Ascending aorta (tissue), 2 donors: ENCODE measurements at regions of chr18 and their contacts with region 1.

Region 1: DNA sequence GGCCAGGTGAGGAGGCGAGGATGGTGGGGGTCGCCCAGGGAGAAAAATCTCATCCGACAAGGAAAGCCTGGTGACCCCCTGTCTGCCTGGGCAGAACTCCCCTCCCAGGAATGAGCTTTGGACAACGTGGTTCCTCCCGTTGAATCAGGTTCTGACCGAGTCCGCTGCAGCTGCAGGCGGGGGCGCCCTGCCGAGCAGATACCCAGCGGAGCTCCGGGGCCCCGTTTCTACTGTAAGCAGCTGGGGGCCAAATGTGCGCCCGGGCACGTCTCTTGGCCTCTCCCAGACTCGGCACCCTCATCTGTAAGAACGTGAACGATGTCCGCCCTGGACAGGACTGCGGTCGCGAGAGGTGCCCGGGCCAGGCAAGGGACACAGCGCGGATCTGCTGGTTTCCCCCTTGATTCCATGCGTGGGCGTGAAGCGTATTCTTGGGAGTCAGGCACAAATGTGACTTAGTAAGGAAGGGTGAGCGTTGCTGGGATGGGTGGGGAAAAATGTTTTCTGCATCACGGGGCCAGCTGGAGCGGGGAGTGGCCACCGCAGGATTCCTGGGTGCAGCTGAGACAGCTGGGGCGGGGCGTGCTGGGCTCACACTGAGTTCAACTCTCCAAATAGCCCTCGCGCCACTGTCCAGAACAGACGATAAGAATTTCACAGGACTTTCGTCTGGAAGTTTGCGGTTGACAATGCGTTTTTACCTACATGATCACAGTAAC is 20.2 kb upstream of the TUBB6 start:
- DNase-seq: peak; percentile 41 to 94
- H3K4me3 ChIP-seq: peak overlapping the region; percentile 41 to 65
- H3K27ac ChIP-seq: peak overlapping the region; percentile 85 to 86
- H3K4me1 ChIP-seq: peaks cover 5 to 7% of the 10 kb centered on the region in 2 donors
- H3K27me3 ChIP-seq: no peaks in the 10 kb centered on the region
- CTCF ChIP-seq: no peak

Region 2: DNA sequence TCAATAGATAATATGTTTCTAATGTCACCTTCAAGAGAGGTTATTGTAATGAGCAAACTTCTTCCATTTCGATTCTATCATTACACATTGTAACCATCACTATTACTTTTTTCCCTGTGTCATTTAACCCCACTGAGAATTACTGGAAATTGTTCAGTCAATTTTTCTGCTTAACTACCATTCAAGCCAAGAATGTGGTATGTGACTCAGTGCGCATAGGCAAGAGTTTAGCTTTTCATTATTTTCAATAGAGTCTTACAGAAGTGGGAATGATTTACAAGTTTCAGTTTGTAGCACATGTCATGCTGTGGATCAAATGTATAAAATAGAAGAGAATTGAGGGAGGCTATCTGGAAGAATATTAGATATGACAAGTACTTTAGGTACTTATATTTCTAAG is 1104.2 kb before region 1 on chr18:
- intact Hi-C with region 1: no loop called
- DNase-seq: no peak
- H3K4me3 ChIP-seq: no peak overlapping the region
- H3K27ac ChIP-seq: no peak overlapping the region
- H3K4me1 ChIP-seq: peaks cover 0 to 14% of the 10 kb centered on the region in 2 donors
- H3K27me3 ChIP-seq: no peaks in the 10 kb centered on the region
- CTCF ChIP-seq: no peak

Region 3: GRCh38 chr18:12271376-12272235 is 16.2 kb before region 1 on chr18:
- intact Hi-C with region 1: loop called (anchors 1 kb)
- DNase-seq: peak in 1 of 2 donors; percentile 86
- H3K4me3 ChIP-seq: peak overlapping the region; percentile 56 to 65
- H3K27ac ChIP-seq: peak overlapping the region; percentile 67 to 68
- H3K4me1 ChIP-seq: peaks cover 0 to 6% of the 10 kb centered on the region in 2 donors
- H3K27me3 ChIP-seq: no peaks in the 10 kb centered on the region
- CTCF ChIP-seq: peak; percentile 70 to 77 (median 75)